Naive thymus-derived CD4-positive, alpha-beta T cell (primary cell): ENCODE measurements at regions of chr3 and their contacts with region 1.

Region 1: DNA sequence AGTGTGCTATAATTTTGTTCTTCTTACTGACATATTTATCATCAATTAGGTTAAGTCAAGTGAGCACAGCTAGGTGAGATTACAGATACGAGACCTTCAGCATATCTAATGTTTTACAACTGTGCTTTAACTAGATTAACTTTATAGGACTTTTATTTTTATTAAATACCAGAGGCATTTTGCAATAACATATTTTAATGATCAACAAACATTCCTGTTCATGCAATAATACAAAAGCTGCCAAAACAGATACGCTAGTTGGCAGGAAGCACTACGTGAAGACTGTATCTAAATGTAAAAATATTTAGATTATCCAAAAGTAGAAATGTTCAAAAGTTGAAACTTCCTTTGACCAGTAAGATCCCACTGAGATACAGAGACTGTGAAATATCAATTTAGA is 139.1 kb downstream of the CBLB start:
- DNase-seq: no peak
- ATAC-seq: no peak
- H3K4me3 ChIP-seq: no peak overlapping the region
- H3K4me3 Mint-ChIP-seq: no peak overlapping the region
- H3K27ac ChIP-seq: no peak overlapping the region
- H3K27ac Mint-ChIP-seq: peak overlapping the region in 1 of 9 donors; percentile 8
- H3K4me1 ChIP-seq: no peaks in the 10 kb centered on the region
- H3K4me1 Mint-ChIP-seq: peaks cover 10 to 28% (median 22%) of the 10 kb centered on the region in 7 donors
- H3K27me3 ChIP-seq: no peaks in the 10 kb centered on the region
- H3K27me3 Mint-ChIP-seq: no peaks in the 10 kb centered on the region

Region 2: GRCh38 chr3:105747060-105747541 is 17.4 kb after region 1 on chr3:
- CTCF ChIA-PET with region 1: no interaction called
- POLR2A ChIA-PET with region 1: no interaction called
- intact Hi-C with region 1: loop called (anchors 2 kb)
- DNase-seq: no peak
- ATAC-seq: peak; percentile 79
- H3K4me3 ChIP-seq: peak overlapping the region; percentile 33
- H3K4me3 Mint-ChIP-seq: peak overlapping the region; percentile 14 to 80 (median 72)
- H3K27ac ChIP-seq: peak overlapping the region; percentile 1
- H3K27ac Mint-ChIP-seq: peak overlapping the region; percentile 3 to 98 (median 77)
- H3K4me1 ChIP-seq: peaks cover 59 to 65% of the 10 kb centered on the region in 2 donors
- H3K4me1 Mint-ChIP-seq: peaks cover 30 to 88% (median 76%) of the 10 kb centered on the region in 7 donors
- H3K27me3 ChIP-seq: no peaks in the 10 kb centered on the region
- H3K27me3 Mint-ChIP-seq: no peaks in the 10 kb centered on the region

Region 3: DNA sequence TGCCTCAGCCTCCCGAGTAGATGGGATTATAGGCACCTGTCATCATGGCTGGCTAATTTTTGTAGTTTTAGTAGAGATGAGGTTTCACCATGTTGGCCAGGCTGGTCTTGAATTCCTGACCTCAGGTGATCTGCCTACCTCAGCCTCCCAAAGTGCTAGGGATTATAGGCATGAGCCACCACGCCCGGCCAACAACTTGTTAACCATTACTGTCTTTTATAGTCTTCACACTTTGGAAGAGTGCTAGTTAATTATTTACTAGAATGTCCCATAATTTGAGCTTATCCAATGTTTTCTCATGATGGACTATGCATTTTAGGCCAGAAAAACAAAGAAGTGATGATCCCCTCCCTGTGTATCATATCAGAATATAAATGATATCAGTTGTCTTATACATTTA is 427.7 kb after region 1 on chr3:
- CTCF ChIA-PET with region 1: no interaction called
- POLR2A ChIA-PET with region 1: no interaction called
- intact Hi-C with region 1: no loop called
- DNase-seq: no peak
- ATAC-seq: no peak
- H3K4me3 ChIP-seq: no peak overlapping the region
- H3K4me3 Mint-ChIP-seq: no peak overlapping the region
- H3K27ac ChIP-seq: no peak overlapping the region
- H3K27ac Mint-ChIP-seq: no peak overlapping the region
- H3K4me1 ChIP-seq: no peaks in the 10 kb centered on the region
- H3K4me1 Mint-ChIP-seq: peaks cover 0 to 4% (median 0%) of the 10 kb centered on the region in 7 donors
- H3K27me3 ChIP-seq: no peaks in the 10 kb centered on the region
- H3K27me3 Mint-ChIP-seq: no peaks in the 10 kb centered on the region